ENCODE measurements at regions of chr4 and their contacts with region 1.

Region 1: DNA sequence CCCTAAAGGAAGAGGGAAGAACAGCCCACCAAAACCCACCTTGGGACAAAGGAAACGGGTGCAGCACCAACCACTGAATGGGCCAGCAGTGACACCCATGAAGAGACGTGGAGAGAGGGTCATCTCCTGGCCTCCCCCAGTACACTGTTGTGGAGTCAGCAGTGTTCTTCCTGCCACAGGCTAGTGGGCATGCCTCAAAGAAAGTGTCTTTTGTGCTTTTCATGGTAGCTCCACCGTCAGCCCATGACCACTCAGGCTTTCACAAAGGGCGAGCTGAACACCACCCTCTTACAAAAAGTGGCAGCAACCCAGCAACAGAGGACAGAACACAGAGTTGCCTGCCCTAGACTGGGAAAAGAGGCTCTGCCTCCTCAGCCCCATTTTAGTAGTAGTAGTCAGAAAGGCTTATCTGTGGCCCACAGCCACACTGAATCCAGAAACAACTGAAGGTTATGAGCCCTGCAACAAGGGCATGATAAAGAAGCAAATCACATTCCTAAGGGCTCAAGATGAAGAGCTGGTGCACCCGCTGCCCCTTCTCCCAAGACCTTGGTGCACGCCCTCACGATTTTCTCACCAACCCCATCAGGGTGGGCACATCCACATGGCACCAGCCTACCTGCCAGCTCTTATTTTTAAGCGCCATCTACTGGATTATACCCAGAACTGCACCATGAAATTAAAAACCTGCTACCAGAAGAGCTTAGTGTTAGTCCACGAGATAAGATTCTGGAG is 53.1 kb downstream of the RAB28 start:
- DNase-seq: no peak
- H3K4me3 ChIP-seq: no peak overlapping the region
- H3K27ac ChIP-seq: no peak overlapping the region
- H3K4me1 ChIP-seq: peaks cover 0 to 6% (median 3%) of the 10 kb centered on the region in 4 experiments; a peak in 3 of 7 replicates
- H3K27me3 ChIP-seq: no peaks in the 10 kb centered on the region
- CTCF ChIP-seq: peak; percentile 19 to 68 (median 61)
- EP300 ChIP-seq: no peak
- POLR2A ChIP-seq: no peak
- RAD21 ChIP-seq: peak; percentile 76 to 81

Region 2: DNA sequence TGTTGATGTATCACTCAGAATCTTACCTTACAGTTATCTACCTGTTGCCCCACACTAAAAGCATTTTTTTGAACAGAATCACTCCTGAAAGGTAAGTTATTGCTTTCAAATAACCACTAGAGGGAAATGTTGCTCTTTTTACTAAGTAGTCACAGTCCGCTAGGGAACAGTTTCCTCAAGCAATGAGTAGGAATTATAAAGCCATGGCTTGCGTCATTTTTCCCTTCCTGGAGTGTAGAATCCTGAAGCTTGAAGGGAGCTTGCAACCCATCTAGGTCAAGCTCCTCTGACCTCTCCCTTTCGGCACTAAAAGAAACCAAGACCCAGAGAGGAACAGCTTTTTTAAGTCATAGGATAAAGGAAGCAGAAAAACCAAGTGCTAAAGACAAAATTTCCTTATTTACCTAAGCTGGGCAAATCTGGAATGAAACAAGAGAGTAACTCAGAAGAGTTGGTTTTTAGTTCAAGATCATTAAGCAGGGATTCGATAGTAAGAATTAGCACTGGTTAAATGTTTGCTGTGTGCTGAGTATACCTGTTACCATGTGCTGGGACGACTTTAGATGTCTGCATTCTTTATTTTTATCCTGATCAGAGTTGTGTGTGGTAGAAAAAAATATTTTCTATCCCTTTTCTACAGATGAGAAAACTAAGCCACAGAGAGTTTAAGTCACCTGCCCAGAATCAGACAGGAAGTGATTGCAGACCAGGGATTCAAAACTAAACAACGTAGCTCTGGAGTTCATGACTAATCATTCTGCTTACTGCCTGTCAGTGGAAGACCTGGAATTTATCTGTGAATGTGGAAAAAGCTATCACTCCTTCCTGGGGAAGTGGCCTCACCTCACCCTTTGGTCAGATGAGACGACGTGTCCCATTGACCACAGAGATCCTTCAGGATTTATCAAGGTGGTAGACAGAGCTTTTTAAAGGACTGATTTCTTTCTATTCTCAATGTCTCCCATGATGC is 578.4 kb before region 1 on chr4:
- CTCF ChIA-PET with region 1: interaction called, 28 read pairs
- POLR2A ChIA-PET with region 1: no interaction called
- DNase-seq: peak in 1 of 2 experiments; percentile 15
- H3K4me3 ChIP-seq: no peak overlapping the region
- H3K27ac ChIP-seq: no peak overlapping the region
- H3K4me1 ChIP-seq: no peaks in the 10 kb centered on the region
- H3K27me3 ChIP-seq: peaks cover 0 to 1% (median 0%) of the 10 kb centered on the region in 4 experiments; a peak in 1 of 7 replicates
- CTCF ChIP-seq: peak in 2 of 3 experiments; percentile 51 to 62; a peak in 2 of 4 replicates
- EP300 ChIP-seq: no peak
- POLR2A ChIP-seq: no peak
- RAD21 ChIP-seq: peak; percentile 90 to 94

Region 3: GRCh38 chr4:13248621-13249298 is 182.2 kb before region 1 on chr4:
- CTCF ChIA-PET with region 1: interaction called, 12 read pairs
- POLR2A ChIA-PET with region 1: no interaction called
- DNase-seq: no peak
- H3K4me3 ChIP-seq: no peak overlapping the region
- H3K27ac ChIP-seq: no peak overlapping the region
- H3K4me1 ChIP-seq: peaks cover 0 to 5% (median 0%) of the 10 kb centered on the region in 4 experiments; a peak in 1 of 7 replicates
- H3K27me3 ChIP-seq: no peaks in the 10 kb centered on the region
- CTCF ChIP-seq: peak in 2 of 3 experiments; percentile 51 to 61; a peak in 3 of 4 replicates
- EP300 ChIP-seq: no peak
- POLR2A ChIP-seq: no peak
- RAD21 ChIP-seq: peak; percentile 56 to 59

Region 4: GRCh38 chr4:13285336-13285735 is 145.7 kb before region 1 on chr4:
- CTCF ChIA-PET with region 1: interaction called, 12 read pairs
- POLR2A ChIA-PET with region 1: no interaction called
- DNase-seq: no peak
- H3K4me3 ChIP-seq: no peak overlapping the region
- H3K27ac ChIP-seq: no peak overlapping the region
- H3K4me1 ChIP-seq: no peaks in the 10 kb centered on the region
- H3K27me3 ChIP-seq: no peaks in the 10 kb centered on the region
- CTCF ChIP-seq: no peak
- EP300 ChIP-seq: no peak
- POLR2A ChIP-seq: no peak
- RAD21 ChIP-seq: no peak

Region 5: DNA sequence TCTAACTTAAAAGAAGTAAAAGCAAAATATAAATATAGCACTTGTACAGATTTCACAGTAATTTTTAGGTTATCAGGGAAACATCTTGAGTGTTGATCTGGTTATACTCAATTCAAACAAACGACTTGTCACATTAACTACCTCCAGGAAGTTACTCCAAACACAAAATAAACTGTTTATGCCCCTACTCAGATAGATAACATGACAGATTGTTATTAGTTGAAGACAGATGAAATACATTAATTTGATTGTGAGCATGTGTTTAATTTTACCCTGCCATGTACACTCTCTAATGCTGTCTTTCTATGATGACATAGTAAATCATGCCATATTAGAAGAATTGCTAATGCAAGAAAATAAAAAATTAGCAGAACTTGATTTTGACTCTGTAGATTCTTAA is 34.8 kb before region 1 on chr4:
- CTCF ChIA-PET with region 1: no interaction called
- POLR2A ChIA-PET with region 1: no interaction called
- DNase-seq: no peak
- H3K4me3 ChIP-seq: no peak overlapping the region
- H3K27ac ChIP-seq: no peak overlapping the region
- H3K4me1 ChIP-seq: no peaks in the 10 kb centered on the region
- H3K27me3 ChIP-seq: no peaks in the 10 kb centered on the region
- CTCF ChIP-seq: no peak
- EP300 ChIP-seq: no peak
- POLR2A ChIP-seq: no peak
- RAD21 ChIP-seq: no peak

Region 6: DNA sequence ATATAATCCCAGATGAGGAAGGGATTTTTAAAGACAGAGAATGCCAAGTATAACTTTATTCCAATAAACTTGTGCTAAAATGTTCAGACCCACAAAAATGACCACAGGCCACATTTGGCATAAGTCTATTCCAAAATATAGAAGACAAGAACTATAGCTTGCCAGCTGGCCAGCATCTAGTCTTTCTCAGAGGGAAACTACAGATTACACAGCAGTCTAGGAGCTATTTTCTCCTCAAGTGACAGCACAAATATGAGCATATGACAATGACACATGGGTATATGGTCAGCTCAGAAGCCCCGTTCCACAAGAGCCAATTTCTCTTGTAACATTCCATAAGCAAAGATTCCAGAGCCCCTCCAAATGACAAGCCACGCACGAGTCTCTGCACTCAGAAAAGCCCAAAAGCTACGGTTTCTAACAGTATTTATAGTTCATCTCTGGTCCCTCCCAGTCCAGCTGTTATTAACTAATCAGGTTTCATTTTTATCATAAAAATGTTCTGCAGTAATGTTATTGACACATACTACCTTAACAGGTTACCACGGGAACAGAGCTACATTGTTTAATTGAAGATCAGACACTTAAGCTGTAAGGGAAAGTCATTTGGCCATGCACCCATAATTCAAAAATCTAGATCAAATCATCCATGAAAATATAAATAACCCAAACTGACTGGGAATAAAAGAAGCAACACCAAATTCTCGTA is 17.1 kb before region 1 on chr4:
- CTCF ChIA-PET with region 1: interaction called, 42 read pairs
- POLR2A ChIA-PET with region 1: no interaction called
- DNase-seq: no peak
- H3K4me3 ChIP-seq: no peak overlapping the region
- H3K27ac ChIP-seq: no peak overlapping the region
- H3K4me1 ChIP-seq: peaks cover 0 to 9% (median 1%) of the 10 kb centered on the region in 4 experiments; a peak in 3 of 7 replicates
- H3K27me3 ChIP-seq: no peaks in the 10 kb centered on the region
- CTCF ChIP-seq: no peak
- EP300 ChIP-seq: no peak
- POLR2A ChIP-seq: no peak
- RAD21 ChIP-seq: no peak

Region 7: DNA sequence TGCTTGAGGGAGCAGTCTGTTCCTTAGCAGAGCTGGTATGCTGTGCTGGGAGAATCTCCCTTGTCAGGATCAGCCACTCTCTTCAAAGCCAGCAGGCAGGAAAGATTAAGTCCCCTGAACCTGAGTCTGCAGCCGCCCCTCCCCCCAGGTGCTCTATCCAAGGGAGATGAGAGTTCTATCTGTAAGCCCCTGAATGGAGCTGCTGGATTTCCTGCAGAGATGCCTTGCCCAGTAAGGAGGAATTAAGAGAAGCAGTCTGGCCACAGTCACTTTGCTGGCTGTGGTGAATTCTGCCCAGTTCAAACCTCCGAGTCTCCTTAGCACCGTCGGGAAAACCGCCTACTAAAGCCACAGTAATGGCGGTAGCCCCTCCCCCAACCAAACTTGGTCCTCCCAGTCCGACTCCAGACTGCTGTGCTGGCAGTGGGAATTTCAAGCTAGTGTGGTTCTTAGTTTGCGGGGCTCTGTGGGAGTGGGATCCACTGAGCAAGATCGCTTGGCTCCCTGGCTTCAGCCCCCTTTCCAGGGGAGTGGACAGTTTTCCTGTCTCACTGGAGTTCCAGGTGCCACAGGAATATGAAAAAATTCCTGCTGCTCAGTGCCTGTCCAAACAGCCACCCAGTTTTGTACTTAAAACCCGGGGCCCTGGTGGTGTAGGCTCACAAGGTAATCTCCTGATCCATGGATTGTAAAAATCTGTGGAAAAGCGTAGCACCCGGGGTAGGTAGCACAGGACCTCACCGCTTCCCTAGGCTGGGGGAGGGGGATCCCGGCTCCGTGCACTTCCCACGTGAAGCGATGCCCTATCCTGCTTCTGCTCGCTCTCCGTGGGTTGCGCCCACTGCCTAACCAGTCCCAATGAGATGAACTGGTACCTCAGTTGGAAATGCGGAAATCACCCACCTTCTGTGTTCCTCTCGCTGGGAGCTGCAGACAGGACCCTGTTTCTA is 15.1 kb after region 1 on chr4:
- CTCF ChIA-PET with region 1: interaction called, 45 read pairs
- POLR2A ChIA-PET with region 1: interaction called, 5 read pairs
- DNase-seq: peak in 1 of 2 experiments; percentile 82
- H3K4me3 ChIP-seq: peak overlapping the region; percentile 79 to 96 (median 82)
- H3K27ac ChIP-seq: peak overlapping the region; percentile 67
- H3K4me1 ChIP-seq: peaks cover 0 to 6% (median 2%) of the 10 kb centered on the region in 4 experiments; a peak in 3 of 7 replicates
- H3K27me3 ChIP-seq: no peaks in the 10 kb centered on the region
- CTCF ChIP-seq: 0 out of 4 replicates have a peak, but pooled peaks of 1 of the 3 experiments have one; percentile 6
- EP300 ChIP-seq: no peak
- POLR2A ChIP-seq: peak; percentile 58 to 64; a peak in 2 of 3 replicates
- RAD21 ChIP-seq: peak in 1 of 2 experiments; percentile 2; a peak in 1 of 4 replicates

Region 8: GRCh38 chr4:13493793-13494192 is 62.8 kb after region 1 on chr4:
- CTCF ChIA-PET with region 1: no interaction called
- POLR2A ChIA-PET with region 1: no interaction called
- DNase-seq: no peak
- H3K4me3 ChIP-seq: no peak overlapping the region
- H3K27ac ChIP-seq: no peak overlapping the region
- H3K4me1 ChIP-seq: no peaks in the 10 kb centered on the region
- H3K27me3 ChIP-seq: no peaks in the 10 kb centered on the region
- CTCF ChIP-seq: no peak
- EP300 ChIP-seq: no peak
- POLR2A ChIP-seq: no peak
- RAD21 ChIP-seq: no peak

Region 9: GRCh38 chr4:13601048-13601447 is 170.0 kb after region 1 on chr4:
- CTCF ChIA-PET with region 1: no interaction called
- POLR2A ChIA-PET with region 1: no interaction called
- DNase-seq: no peak
- H3K4me3 ChIP-seq: no peak overlapping the region
- H3K27ac ChIP-seq: no peak overlapping the region
- H3K4me1 ChIP-seq: no peaks in the 10 kb centered on the region
- H3K27me3 ChIP-seq: no peaks in the 10 kb centered on the region
- CTCF ChIP-seq: no peak
- EP300 ChIP-seq: no peak
- POLR2A ChIP-seq: no peak
- RAD21 ChIP-seq: no peak